Endothelial cell of umbilical vein (primary cell): ENCODE measurements at regions of chr18 and their contacts with region 1.

Region 1: GRCh38 chr18:3585656-3586509 is 135.9 kb downstream of the TGIF1 start:
- DNase-seq: peak; percentile 81
- H3K4me3 ChIP-seq: no peak overlapping the region
- H3K27ac ChIP-seq: no peak overlapping the region
- H3K4me1 ChIP-seq: peaks cover 2% of the 10 kb centered on the region
- H3K27me3 ChIP-seq: no peaks in the 10 kb centered on the region
- CTCF ChIP-seq: peak; percentile 75 to 78
- POLR2A ChIP-seq: no peak

Region 2: DNA sequence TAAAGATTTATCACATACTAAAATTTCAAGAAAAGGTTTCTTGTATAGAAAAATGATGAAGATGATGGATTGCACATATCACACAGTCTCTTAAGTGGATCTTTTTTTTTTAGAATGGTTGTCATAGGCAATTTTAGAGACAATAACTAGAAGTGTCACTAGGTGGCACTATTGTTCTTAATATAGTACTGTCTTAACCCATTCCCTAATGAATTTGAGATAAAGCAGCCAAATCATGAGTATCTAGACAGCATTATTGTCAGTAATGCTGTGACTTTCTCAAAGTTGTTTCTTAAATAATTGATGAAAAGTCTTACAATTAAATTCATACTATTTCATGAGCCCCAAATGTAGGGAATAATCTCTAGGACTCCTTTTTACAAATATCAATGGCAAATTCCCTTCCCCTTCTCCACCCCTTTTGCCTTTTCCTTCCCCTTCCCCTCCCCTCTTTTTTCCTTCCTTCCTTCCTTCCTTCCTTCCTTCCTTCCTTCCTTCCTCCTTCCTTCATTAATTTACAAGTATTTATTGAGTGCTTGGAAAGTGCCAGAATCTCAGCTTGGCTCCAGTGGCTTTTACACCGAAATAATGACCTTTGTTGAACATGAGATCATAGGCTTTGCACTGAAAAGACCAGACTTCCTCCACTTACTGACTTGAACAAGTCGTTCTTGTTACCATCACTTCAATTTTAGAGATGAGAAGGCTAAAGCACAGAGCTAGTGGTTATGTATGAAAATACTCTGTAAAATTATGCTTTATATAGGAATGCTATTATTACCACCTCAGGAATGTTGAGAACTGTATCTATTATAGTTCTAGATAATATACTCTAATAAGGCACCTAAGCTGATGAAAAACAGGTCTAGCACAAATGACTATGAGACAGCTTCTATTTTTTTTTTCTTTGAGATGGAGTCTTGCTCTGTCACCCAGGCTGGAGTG is 304.2 kb before region 1 on chr18:
- CTCF ChIA-PET with region 1: interaction called, 42 read pairs
- POLR2A ChIA-PET with region 1: no interaction called
- dilution Hi-C with region 1: no loop called
- intact Hi-C with region 1: loop called (anchors 1 kb)
- DNase-seq: peak; percentile 91
- H3K4me3 ChIP-seq: no peak overlapping the region
- H3K27ac ChIP-seq: peak overlapping the region; percentile 84
- H3K4me1 ChIP-seq: peaks cover 38% of the 10 kb centered on the region
- H3K27me3 ChIP-seq: no peaks in the 10 kb centered on the region
- CTCF ChIP-seq: peak; percentile 6 to 21
- POLR2A ChIP-seq: no peak

Region 3: DNA sequence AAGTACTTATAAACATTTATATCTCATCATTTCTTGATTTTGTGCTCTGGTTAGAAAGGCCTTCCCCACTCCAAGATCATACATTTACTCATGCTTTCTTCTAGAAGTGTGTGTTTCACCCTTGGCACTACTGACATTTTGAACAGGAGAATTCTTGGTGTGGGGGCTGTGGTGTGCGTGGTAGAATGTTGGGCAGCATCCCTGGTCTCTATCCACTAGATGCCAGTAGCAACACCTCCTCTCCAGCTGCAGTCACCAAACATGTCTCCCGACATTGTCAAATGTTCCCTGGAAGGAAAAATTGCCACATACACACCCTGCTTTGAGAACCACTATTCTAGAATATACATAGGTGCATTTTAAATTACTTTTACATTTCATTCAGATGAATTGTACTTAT is 144.6 kb before region 1 on chr18:
- CTCF ChIA-PET with region 1: interaction called, 26 read pairs
- POLR2A ChIA-PET with region 1: no interaction called
- dilution Hi-C with region 1: no loop called
- intact Hi-C with region 1: no loop called
- DNase-seq: peak; percentile 50
- H3K4me3 ChIP-seq: no peak overlapping the region
- H3K27ac ChIP-seq: no peak overlapping the region
- H3K4me1 ChIP-seq: peaks cover under 1% of the 10 kb centered on the region
- H3K27me3 ChIP-seq: peaks cover 0 to 2% of the 10 kb centered on the region in 2 experiments
- CTCF ChIP-seq: peak in 1 of 2 donors; percentile 45
- POLR2A ChIP-seq: no peak

Region 4: GRCh38 chr18:3498698-3499471 is 87.0 kb before region 1 on chr18:
- CTCF ChIA-PET with region 1: interaction called, 14 read pairs
- POLR2A ChIA-PET with region 1: no interaction called
- dilution Hi-C with region 1: no loop called
- intact Hi-C with region 1: no loop called
- DNase-seq: peak; percentile 43
- H3K4me3 ChIP-seq: peak overlapping the region in 2 of 3 experiments; percentile 45 to 49
- H3K27ac ChIP-seq: no peak overlapping the region
- H3K4me1 ChIP-seq: peaks cover 14% of the 10 kb centered on the region
- H3K27me3 ChIP-seq: peaks cover 0 to 2% of the 10 kb centered on the region in 2 experiments
- CTCF ChIP-seq: no peak
- POLR2A ChIP-seq: no peak

Region 5: GRCh38 chr18:3604498-3605408 is 18.9 kb after region 1 on chr18:
- CTCF ChIA-PET with region 1: interaction called, 15 read pairs
- POLR2A ChIA-PET with region 1: no interaction called
- dilution Hi-C with region 1: no loop called
- intact Hi-C with region 1: no loop called
- DNase-seq: peak; percentile 90
- H3K4me3 ChIP-seq: peak overlapping the region; percentile 41 to 95 (median 83)
- H3K27ac ChIP-seq: peak overlapping the region; percentile 96
- H3K4me1 ChIP-seq: peaks cover 43% of the 10 kb centered on the region
- H3K27me3 ChIP-seq: no peaks in the 10 kb centered on the region
- CTCF ChIP-seq: no peak
- POLR2A ChIP-seq: peak; percentile 32

Region 6: DNA sequence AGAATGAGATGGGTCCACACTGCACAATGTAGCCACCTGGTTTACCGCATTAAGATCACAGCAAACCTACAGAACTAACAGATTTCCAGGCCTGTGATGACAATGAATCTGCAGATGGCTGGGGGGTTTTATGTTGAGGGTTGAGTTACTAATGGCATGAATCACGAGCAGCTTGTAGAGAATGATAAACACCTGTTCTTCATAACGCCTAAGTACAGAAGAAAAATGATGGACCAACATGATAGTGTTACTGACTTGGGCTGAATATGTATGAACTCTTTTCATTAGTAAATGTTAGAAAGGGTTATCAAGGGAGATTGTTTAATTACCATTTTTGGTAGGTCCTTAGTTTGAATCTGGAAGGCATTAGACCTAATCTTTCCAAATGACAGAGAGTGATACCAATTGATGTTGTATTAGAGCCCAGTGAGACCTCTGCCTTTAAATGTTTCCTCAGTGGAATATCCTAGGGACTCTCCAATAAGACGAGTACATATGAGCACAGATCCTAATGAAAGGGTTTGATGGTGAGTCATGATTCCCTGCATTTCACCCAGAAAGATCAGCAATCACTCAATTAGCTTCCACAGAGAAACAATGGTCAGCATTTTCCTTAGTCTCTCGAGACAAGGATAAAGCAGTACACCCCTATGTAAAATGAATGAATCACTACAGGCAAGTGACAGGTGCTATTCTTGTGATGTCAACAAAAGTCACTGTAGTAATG is 625.4 kb after region 1 on chr18:
- CTCF ChIA-PET with region 1: no interaction called
- POLR2A ChIA-PET with region 1: no interaction called
- dilution Hi-C with region 1: no loop called
- intact Hi-C with region 1: no loop called
- DNase-seq: no peak
- H3K4me3 ChIP-seq: no peak overlapping the region
- H3K27ac ChIP-seq: no peak overlapping the region
- H3K4me1 ChIP-seq: no peaks in the 10 kb centered on the region
- H3K27me3 ChIP-seq: no peaks in the 10 kb centered on the region
- CTCF ChIP-seq: no peak
- POLR2A ChIP-seq: no peak